ENCODE measurements at regions of chr5 and their contacts with region 1.

Region 1: DNA sequence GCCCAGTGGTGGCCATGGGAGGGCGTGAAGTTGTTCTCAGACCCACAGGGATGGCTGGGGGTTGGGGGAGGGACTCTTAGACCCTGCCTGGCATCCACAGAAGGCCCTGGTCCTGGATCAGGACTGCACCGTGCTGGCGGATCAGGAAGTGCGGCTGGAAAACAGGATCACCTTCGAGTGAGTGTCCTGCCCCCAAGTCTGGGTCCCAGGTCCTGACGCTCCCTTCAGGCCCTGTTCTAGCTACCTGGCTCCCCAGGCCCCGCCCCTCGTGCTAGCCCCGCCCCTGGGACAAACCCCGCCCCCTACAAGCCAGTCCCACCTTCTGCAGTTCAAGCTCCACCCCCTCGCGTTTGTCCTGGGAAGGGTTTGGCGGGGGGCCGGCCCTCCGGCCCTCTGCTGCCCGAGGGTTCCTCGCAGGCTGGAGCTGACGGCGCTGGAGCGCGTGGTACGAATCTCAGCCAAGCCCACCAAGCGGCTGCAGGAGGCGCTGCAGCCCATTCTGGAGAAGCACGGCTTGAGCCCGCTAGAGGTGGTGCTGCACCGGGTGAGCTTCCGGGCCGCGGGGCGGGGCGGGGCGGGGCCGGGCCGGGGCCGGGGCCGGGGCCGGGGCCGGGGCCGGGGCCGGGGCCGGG is 12.9 kb downstream of the RGS14 start:
- DNase-seq: peak; percentile 90
- H3K4me3 ChIP-seq: peak overlapping the region in 1 of 3 experiments; percentile 29
- H3K27ac ChIP-seq: no peak overlapping the region
- H3K4me1 ChIP-seq: peaks cover 28% of the 10 kb centered on the region
- H3K27me3 ChIP-seq: no peaks in the 10 kb centered on the region
- CTCF ChIP-seq: peak; percentile 52 to 81
- POLR2A ChIP-seq: no peak

Region 2: DNA sequence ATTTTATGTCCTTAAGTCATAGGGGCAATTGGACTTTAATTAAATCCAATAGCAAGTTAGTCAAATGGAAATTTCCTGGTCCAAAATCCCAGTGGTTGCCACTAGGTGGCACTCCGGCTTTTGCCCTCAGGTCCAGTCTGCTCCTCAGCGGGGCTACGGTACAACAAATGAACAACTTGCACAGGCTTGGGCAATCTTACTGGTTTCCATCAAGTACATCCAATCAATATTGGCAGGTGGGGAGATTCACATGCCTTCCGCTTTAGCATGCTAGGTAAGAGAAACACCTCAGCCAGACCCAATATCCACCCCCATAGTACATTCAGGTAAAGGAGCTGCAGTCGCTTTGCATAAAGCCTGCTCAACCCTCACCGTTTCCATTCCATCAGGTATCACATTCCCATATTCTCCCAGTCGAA is 52.6 kb before region 1 on chr5:
- CTCF ChIA-PET with region 1: interaction called, 14 read pairs
- POLR2A ChIA-PET with region 1: no interaction called
- dilution Hi-C with region 1: no loop called
- intact Hi-C with region 1: loop called (anchors 5 kb)
- DNase-seq: peak; percentile 82
- H3K4me3 ChIP-seq: no peak overlapping the region
- H3K27ac ChIP-seq: no peak overlapping the region
- H3K4me1 ChIP-seq: peaks cover under 1% of the 10 kb centered on the region
- H3K27me3 ChIP-seq: no peaks in the 10 kb centered on the region
- CTCF ChIP-seq: peak; percentile 83 to 93
- POLR2A ChIP-seq: no peak

Region 3: DNA sequence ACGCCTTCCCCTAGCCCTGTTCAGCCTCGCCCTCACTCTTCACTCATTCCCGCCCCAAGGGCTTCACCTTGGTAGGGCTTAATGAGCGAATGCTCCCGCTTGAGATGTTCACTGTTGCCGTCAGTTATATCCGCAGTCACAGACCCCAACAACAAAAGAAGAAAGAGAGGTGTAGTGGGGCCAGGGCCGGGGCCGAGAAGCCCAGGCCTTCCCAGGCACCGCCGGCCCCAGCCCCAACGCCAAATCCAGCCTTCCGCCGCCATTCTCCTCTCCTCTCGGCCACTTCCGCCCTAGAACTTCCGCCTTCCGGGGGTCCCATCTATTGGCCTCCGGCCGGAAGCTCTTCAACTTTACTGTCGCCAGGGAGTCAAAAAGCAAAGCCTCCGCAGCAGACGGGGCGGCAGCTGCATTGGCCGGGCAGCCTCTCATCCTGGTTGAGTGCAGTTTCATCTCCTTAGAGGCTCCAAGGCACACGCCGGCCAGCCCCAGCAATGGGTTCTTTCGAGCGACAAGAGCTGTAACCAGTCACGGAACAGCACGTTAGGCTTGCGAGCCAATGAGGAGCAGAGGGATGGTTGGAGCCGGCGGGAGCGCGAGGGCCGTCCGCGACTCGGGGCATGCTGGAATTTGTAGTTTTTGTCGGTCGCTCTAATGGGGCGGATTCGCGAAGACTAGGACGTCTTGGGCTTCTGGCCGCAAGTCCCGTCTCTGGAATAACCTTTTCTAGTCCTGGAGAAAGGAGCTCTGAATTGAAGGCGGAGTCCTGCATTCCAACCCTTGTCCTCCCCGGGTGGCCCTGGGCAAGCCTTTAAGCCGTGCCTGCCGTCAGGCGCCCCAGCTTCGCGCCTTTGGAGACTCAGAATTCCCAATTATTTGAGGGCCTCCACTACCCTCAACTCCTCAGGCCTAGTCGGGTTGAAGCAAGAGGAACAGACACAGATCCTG is 18.9 kb before region 1 on chr5 and contains the start of gene LMAN2:
- CTCF ChIA-PET with region 1: interaction called, 31 read pairs
- POLR2A ChIA-PET with region 1: interaction called, 3 read pairs
- dilution Hi-C with region 1: no loop called
- intact Hi-C with region 1: loop called (anchors 1 kb)
- DNase-seq: peak; percentile 97
- H3K4me3 ChIP-seq: peak within 1 kb of the TSS; percentile 29 to 95 (median 61)
- H3K27ac ChIP-seq: peak within 1 kb of the TSS; percentile 77
- H3K4me1 ChIP-seq: peaks cover 21% of the 10 kb centered on the region
- H3K27me3 ChIP-seq: no peaks in the 10 kb centered on the region
- CTCF ChIP-seq: no peak
- POLR2A ChIP-seq: peak; percentile 77
- total RNA-seq, gene LMAN2: 151 and 160 TPM in 2 replicates

Region 4: DNA sequence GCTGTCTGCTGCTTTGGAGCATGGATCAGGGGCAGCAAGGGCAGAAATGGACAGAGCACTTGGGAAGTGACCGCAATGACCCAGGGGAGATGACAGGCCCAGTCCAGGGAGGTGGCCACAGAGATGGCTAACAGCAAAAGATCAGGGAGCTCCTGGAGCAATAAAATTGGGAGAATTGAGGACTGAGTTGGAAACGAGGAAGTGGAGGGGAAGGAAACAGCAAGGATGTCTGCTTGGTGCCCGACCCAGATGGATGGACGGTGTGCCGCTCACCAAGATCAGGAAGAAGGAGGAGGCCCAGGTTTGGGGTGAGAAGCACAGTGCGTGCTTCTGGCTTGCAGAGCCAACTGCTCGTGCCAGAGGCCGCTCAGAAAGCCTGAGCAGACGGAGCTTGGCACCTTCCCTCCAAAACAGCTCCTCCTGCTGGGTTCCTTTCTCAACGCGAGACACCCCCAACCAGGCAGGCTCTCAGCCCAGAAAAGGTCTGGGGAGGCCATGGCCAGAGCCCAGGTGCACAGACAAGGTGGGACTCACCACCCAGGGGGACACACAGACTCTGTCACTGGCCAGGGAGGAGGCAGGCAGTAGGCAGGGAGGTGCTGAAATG is 11.9 kb after region 1 on chr5:
- CTCF ChIA-PET with region 1: interaction called, 48 read pairs
- POLR2A ChIA-PET with region 1: no interaction called
- dilution Hi-C with region 1: no loop called
- intact Hi-C with region 1: loop called (anchors 1 kb)
- DNase-seq: peak; percentile 37
- H3K4me3 ChIP-seq: no peak overlapping the region
- H3K27ac ChIP-seq: no peak overlapping the region
- H3K4me1 ChIP-seq: no peaks in the 10 kb centered on the region
- H3K27me3 ChIP-seq: peaks cover 0 to 4% of the 10 kb centered on the region in 2 experiments
- CTCF ChIP-seq: peak in 1 of 2 donors; percentile 58
- POLR2A ChIP-seq: no peak

Region 5: GRCh38 chr5:177403792-177404640 is 33.4 kb after region 1 on chr5:
- CTCF ChIA-PET with region 1: interaction called, 42 read pairs
- POLR2A ChIA-PET with region 1: no interaction called
- dilution Hi-C with region 1: no loop called
- intact Hi-C with region 1: no loop called
- DNase-seq: peak; percentile 73
- H3K4me3 ChIP-seq: peak overlapping the region; percentile 27 to 42 (median 34)
- H3K27ac ChIP-seq: no peak overlapping the region
- H3K4me1 ChIP-seq: peaks cover 23% of the 10 kb centered on the region
- H3K27me3 ChIP-seq: peaks cover 34 to 39% of the 10 kb centered on the region in 2 experiments
- CTCF ChIP-seq: peak; percentile 81 to 87
- POLR2A ChIP-seq: peak; percentile 41

Region 6: DNA sequence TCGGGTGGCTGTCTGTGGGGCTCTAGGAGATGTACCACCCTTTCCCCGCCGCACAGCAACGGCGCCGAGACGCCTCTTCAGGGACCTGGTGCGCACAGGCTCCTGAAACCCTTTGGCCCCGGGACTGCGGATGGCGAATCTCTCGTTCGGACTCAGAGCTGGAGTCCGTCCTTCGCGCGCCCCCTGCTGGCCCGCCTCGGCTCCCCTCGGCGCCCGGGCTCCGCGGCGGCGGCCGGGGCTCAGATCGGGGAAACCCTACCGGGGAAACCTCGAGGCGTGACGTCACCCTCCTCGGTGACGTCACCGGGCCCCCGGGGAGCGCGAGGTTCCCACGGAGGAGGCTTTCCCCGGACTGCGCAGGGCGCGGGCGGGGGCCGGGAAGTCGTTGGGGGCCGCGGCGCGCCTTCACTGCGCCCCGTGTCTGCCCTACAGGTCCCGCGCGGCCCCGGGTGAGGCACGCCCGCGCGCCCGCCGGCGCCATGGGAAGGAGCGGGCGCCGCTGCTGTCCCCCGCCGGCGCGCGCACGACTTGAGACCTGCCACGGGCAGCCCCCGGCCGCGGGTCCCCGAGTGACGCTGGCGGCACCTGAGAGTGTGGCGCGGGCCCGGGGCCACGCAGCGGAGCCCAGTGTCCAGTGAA is 83.9 kb after region 1 on chr5:
- CTCF ChIA-PET with region 1: interaction called, 11 read pairs
- POLR2A ChIA-PET with region 1: no interaction called
- dilution Hi-C with region 1: no loop called
- intact Hi-C with region 1: no loop called
- DNase-seq: peak; percentile 92
- H3K4me3 ChIP-seq: peak overlapping the region; percentile 6 to 38 (median 21)
- H3K27ac ChIP-seq: peak overlapping the region; percentile 77
- H3K4me1 ChIP-seq: peaks cover 28% of the 10 kb centered on the region
- H3K27me3 ChIP-seq: no peaks in the 10 kb centered on the region
- CTCF ChIP-seq: peak; percentile 83 to 99
- POLR2A ChIP-seq: peak; percentile 59

Region 7: DNA sequence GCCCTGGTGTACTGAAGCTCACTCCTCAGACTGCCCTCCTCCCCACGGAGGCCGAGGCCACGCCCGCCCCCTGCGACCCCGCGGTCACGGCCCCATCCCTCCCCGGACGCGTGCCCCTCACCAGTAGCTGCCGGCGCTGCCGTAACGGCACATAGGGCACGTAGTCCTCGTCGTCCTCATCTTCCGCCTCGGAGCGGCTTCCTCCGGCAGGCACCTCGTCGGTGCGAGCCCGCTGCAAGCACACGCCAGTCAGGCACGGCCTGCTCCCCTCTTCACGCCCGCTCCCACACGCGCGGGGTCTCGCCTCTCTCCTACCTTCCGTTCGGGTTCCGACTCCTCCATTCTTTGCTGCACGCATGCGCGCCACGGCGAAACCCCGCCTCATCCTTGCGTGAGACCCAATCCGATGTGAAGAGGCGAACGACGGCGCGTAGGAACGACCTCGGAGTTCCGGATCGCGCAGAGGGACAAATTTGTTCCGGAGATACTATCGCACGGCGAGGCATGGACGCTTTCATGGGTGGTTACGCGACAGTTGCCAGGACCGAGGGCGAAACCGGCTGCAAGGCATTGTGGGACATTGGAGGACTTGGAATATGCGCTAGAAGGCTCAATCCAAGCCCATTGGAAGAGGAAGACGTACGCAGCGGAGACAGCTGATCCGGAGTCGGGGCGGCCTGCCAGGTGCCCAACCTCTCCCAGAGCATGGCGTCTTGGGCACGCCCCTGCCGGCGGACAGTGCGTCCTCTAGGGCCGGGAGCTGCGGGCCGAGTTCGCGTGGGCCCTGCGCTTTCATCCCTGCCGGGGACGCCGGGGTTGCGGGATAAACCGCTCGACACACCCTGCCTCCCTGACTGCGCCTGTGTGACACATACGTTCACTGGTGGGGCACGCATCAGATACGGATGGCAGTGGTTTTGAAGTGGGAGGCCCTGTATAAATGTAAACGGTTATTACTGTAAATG is 146.3 kb after region 1 on chr5 and contains the start of gene DDX41:
- CTCF ChIA-PET with region 1: no interaction called
- POLR2A ChIA-PET with region 1: no interaction called
- dilution Hi-C with region 1: no loop called
- intact Hi-C with region 1: no loop called
- DNase-seq: peak; percentile 100
- H3K4me3 ChIP-seq: peak within 1 kb of the TSS; percentile 26 to 98 (median 51)
- H3K27ac ChIP-seq: peak within 1 kb of the TSS; percentile 18
- H3K4me1 ChIP-seq: peaks cover 8% of the 10 kb centered on the region
- H3K27me3 ChIP-seq: no peaks in the 10 kb centered on the region
- CTCF ChIP-seq: peak in 1 of 2 donors; percentile 5
- POLR2A ChIP-seq: no peak
- total RNA-seq, gene DDX41: 86.4 and 103 TPM in 2 replicates